AG04449 (cell line): ENCODE measurements at regions of chr18 and their contacts with region 1.

Region 1: DNA sequence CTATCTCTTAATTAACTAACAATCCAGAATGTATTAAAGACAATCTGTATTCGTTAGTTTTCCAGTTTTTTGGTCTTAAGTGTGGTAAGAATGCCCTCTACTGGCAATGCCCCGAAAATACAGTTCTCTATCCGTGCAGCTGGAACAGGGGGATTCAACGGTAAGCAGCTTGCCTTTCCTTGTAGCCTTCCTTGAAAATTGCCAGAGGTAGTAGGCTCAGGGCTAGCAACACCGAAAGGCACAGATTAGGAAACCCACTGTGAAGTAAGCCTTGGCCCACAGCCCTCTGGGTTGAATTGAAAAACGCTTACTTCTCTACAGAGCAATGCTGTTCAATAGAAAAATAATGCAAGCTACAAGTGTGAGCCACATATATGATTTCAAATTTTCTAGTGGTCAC is 17.1 kb upstream of the VPS4B start:
- DNase-seq: no peak
- H3K4me3 ChIP-seq: no peak overlapping the region
- CTCF ChIP-seq: peak; percentile 69

Region 2: GRCh38 chr18:63131106-63131958 is 308.0 kb before region 1 on chr18:
- CTCF ChIA-PET with region 1: interaction called, 41 read pairs
- POLR2A ChIA-PET with region 1: no interaction called
- DNase-seq: no peak
- H3K4me3 ChIP-seq: no peak overlapping the region
- CTCF ChIP-seq: peak; percentile 49

Region 3: DNA sequence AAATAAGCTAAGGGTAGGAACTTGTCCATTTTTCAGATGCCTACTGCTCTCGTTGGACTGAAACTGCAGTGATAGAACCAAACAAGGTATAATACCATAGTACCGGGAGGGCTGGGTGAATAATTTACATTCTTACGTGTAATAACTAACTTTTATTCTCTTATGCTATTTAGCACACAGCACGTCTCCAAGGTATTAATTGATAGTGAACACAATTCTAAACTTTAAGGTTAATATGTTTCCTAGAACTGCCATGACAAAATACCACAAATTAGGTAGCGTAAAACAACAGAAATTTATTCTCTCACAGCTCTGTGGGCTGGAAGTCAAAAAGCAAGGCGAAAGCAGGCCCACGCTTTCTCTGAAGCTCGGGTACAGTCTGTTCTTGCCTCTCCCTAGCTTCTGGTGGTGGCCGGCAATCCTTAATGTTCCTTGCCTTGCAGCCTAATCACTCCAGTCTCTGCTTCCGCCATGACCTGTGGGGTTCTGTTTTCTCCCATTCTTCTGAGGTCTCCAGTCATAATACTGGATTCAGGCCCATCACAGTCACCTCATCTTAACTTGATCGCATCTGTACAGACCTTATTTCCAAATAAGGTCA is 114.1 kb before region 1 on chr18:
- CTCF ChIA-PET with region 1: interaction called, 14 read pairs
- POLR2A ChIA-PET with region 1: no interaction called
- DNase-seq: no peak
- H3K4me3 ChIP-seq: no peak overlapping the region
- CTCF ChIP-seq: no peak

Region 4: DNA sequence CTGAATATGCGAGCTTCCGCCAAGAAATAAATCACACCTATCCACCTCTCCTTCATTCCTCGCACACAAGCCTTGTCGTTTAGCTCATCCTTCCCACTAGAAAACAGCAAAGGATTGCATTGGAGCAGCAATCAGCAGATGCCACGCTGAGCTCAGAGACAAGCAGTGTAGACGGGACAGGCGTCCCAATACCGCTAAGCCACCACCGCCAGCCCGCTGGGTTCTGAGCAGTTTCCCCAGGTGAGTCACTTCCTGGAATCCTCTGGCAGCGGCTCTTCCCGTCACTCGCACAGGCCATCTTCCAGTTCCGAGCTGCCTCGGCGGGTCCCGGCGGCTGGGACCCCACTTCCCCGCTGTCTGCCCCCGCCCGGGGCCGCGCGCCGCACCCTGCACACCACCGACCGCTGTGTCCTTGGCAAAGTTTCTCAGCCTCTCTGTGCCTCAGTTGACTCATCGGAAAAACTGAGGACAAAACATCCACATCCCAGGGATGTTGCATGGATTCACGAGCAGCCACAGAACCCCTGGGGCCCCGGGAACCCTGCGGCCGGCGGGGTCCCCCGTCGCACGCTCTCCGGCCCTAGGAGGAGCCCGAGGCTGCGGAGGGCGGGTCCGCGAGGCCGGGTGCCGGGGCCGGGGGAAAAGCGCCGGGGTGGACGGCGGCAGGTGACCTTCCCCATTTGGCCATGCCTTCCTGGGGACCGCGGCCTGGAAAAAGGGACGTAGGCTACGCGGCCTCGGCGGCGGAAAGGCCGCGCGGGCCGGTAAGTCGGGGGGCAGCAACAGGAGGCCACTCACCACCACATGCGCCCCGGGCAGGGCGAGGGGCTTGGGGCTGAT is 72.9 kb before region 1 on chr18:
- CTCF ChIA-PET with region 1: interaction called, 11 read pairs
- POLR2A ChIA-PET with region 1: interaction called, 3 read pairs
- DNase-seq: no peak
- H3K4me3 ChIP-seq: peak overlapping the region; percentile 81
- CTCF ChIP-seq: no peak

Region 5: DNA sequence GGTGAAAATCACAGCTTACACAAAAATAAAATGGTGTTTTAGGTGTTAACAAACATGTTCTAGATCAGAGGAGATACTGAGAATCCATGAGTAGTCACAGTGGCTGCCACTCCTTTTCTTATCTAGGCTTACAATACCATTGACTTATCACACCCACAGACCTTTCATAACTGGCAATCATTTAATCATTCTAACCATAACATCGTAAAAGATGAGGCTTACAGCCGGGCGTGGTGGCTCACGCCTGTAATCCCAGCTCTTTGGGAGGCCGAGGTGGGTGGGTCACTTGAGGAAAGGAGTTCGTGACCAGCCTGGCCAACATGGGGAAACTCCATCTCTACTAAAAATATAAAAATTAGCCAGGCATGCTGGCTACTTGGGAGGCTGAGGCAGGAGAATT is 18.7 kb after region 1 on chr18:
- CTCF ChIA-PET with region 1: interaction called, 10 read pairs
- POLR2A ChIA-PET with region 1: no interaction called
- DNase-seq: no peak
- H3K4me3 ChIP-seq: no peak overlapping the region
- CTCF ChIP-seq: no peak